ENCODE measurements at regions of chr7 and their contacts with region 1.

Region 1: GRCh38 chr7:38382684-38383083 is 109.2 kb upstream of the TARP start:
- DNase-seq: no peak
- H3K4me3 ChIP-seq: no peak overlapping the region
- H3K27ac ChIP-seq: no peak overlapping the region
- H3K4me1 ChIP-seq: no peaks in the 10 kb centered on the region
- H3K27me3 ChIP-seq: peaks cover 58% of the 10 kb centered on the region
- CTCF ChIP-seq: no peak

Region 2: GRCh38 chr7:38086857-38087256 is 295.8 kb before region 1 on chr7:
- CTCF ChIA-PET with region 1: no interaction called
- POLR2A ChIA-PET with region 1: no interaction called
- intact Hi-C with region 1: no loop called
- DNase-seq: no peak
- H3K4me3 ChIP-seq: no peak overlapping the region
- H3K27ac ChIP-seq: no peak overlapping the region
- H3K4me1 ChIP-seq: no peaks in the 10 kb centered on the region
- H3K27me3 ChIP-seq: no peaks in the 10 kb centered on the region
- CTCF ChIP-seq: no peak

Region 3: DNA sequence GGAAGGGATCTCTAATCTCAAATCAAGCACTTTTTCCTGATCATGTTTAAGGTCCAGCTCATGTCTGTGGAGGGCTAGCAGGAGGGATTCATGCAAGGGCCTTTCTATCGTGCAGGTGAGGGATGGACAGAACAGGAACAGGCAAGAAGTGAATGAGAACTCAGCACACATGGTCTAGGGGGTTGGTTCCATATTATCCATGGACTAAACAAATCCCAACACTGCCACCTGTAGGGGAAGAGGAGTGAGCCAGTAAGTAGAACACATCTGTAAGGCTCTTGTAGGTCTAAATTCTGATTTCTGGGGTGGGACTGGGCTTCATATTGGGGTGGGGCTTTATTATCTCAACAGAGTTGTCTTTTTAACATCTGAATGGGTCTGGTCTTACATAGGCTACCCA is 28.7 kb after region 1 on chr7:
- CTCF ChIA-PET with region 1: no interaction called
- POLR2A ChIA-PET with region 1: no interaction called
- intact Hi-C with region 1: no loop called
- DNase-seq: no peak
- H3K4me3 ChIP-seq: no peak overlapping the region
- H3K27ac ChIP-seq: no peak overlapping the region
- H3K4me1 ChIP-seq: no peaks in the 10 kb centered on the region
- H3K27me3 ChIP-seq: peaks cover 26% of the 10 kb centered on the region
- CTCF ChIP-seq: no peak; the same call in 1 of the 2 replicates

Region 4: GRCh38 chr7:40199076-40199802 is 1816.6 kb after region 1 on chr7:
- CTCF ChIA-PET with region 1: interaction called, 19 read pairs
- POLR2A ChIA-PET with region 1: no interaction called
- intact Hi-C with region 1: no loop called
- DNase-seq: peak in 1 of 2 experiments; percentile 33
- H3K4me3 ChIP-seq: no peak overlapping the region
- H3K27ac ChIP-seq: no peak overlapping the region
- H3K4me1 ChIP-seq: no peaks in the 10 kb centered on the region
- H3K27me3 ChIP-seq: no peaks in the 10 kb centered on the region
- CTCF ChIP-seq: peak; percentile 59

Measured in PC-9 (cell line).